Activated T-helper 1 cell treated with anti-CD3 and anti-CD28 coated beads, Interleukin-12 subunit alpha, Interleukin-12 subunit beta, Interleukin-2, Interleukin-4 antibody, amounts not matched to agents 30 ng/mL and 10 ng/mL and 1 ng/mL, durations not matched to agents 14 hours and 24 hours and 36 hours (primary cell): ENCODE measurements at regions of chr15 and their contacts with region 1.

Region 1: GRCh38 chr15:60179786-60180391 is 175.8 kb downstream of the FOXB1 start:
- DNase-seq: no peak
- H3K4me3 Mint-ChIP-seq: no peak overlapping the region
- H3K27ac Mint-ChIP-seq: no peak overlapping the region
- H3K4me1 Mint-ChIP-seq: no peaks in the 10 kb centered on the region
- H3K27me3 Mint-ChIP-seq: peaks cover 30% of the 10 kb centered on the region

Region 2: GRCh38 chr15:59725172-59725486 is 454.8 kb before region 1 on chr15:
- intact Hi-C with region 1: loop called (anchors 1 kb)
- DNase-seq: no peak
- H3K4me3 Mint-ChIP-seq: no peak overlapping the region
- H3K27ac Mint-ChIP-seq: no peak overlapping the region
- H3K4me1 Mint-ChIP-seq: no peaks in the 10 kb centered on the region
- H3K27me3 Mint-ChIP-seq: peaks cover 20% of the 10 kb centered on the region

Region 3: DNA sequence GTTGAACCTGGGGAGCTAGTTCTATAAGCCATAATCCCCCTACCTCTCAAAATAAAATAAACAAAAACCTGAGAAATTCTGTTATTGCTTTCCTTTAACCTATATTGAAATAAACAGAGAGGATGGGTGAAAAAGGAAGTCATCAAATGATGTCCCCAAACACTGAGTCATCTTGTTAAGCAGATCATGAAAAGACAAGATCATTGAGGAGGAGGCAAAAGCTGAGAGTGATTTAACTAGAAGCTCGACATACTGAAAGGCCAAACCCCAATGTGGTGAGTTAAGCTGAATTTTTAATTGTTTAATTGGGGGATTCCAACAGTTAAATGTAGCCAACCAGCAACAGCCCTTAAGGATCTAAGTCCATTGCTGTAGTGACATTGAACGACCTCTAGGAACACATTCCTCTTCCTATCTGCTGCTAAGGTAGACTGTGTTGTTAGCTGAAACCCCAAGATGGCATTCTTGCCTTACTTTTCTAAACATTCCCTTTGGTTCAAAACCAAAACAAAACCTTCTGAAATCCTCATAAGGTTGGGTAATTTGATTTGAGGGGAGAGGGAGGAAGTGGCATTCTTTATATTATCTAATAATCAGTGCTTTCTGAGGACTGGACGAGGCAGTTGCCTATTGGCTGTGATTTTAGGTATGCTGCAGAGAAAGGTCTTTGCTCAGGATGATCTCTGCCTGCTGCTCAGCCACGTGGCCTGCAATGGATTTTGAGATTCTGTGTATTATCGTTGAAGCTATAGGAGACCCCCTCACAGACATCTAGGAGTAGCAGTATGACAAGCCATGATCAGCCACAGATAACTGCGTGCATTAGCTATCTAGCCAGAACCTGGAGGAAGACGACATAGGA is 428.1 kb before region 1 on chr15:
- intact Hi-C with region 1: loop called (anchors 5 kb)
- DNase-seq: no peak
- H3K4me3 Mint-ChIP-seq: no peak overlapping the region
- H3K27ac Mint-ChIP-seq: no peak overlapping the region
- H3K4me1 Mint-ChIP-seq: peaks cover 5% of the 10 kb centered on the region
- H3K27me3 Mint-ChIP-seq: peaks cover 12% of the 10 kb centered on the region